Mammary epithelial cell (primary cell): ENCODE measurements at regions of chr4 and their contacts with region 1.

Region 1: DNA sequence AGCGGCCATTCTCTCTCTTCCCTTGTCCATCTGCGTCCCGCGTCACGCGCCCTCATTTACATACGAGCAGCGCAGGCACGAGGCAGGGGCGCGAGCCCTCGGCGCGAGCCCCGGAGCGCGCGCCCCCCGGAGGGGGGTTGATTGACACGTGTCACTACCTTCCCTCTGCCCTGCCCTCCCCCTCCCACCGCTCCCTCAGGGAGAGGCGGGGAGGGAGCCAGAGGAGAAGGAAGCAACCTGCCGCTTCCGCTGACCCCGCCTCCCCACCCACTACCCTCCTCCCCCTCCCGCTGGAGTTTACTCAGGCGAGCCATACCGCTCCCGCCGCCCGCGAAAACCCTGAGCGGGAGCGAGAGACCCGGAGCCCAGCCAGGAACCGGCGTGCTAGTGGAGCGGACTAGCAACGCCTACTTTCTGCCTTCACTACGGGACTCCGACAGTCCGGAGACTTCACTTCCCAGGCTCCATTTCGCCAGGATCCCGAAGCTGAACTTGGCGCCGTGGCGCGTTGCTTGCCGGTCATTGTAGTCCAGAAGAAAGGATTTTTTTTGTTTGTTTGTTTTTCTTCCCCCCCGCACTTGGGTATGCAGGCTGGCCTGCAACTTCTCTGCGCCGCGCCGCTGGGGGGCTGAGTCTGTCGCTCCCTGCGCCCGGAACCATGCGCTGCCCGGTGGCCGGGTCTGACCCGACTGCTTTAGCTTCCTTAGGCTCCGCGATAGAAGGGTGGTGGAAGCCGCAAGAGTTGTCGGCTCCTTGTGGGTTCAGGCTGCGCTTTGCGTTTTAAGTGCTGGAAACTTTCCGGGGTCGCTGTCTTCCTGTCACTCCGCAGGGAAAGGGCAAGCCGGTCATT is at the start of gene LCORL:
- DNase-seq: peak; percentile 96
- H3K4me3 ChIP-seq: peak within 1 kb of the TSS; percentile 61 to 99 (median 94)
- H3K27ac ChIP-seq: peak within 1 kb of the TSS; percentile 83
- H3K4me1 ChIP-seq: peaks cover 7% of the 10 kb centered on the region
- H3K27me3 ChIP-seq: no peaks in the 10 kb centered on the region
- CTCF ChIP-seq: no peak
- total RNA-seq, gene LCORL: 11.3 to 14.6 TPM

Region 2: GRCh38 chr4:17576932-17577665 is 444.8 kb before region 1 on chr4 and contains the start of gene LAP3:
- CTCF ChIA-PET with region 1: no interaction called
- dilution Hi-C with region 1: no loop called
- in situ Hi-C with region 1: no loop called
- intact Hi-C with region 1: loop called (anchors 5 kb)
- DNase-seq: peak; percentile 95
- H3K4me3 ChIP-seq: peak within 1 kb of the TSS; percentile 72 to 84 (median 72)
- H3K27ac ChIP-seq: peak within 1 kb of the TSS; percentile 89
- H3K4me1 ChIP-seq: peaks cover 6% of the 10 kb centered on the region
- H3K27me3 ChIP-seq: no peaks in the 10 kb centered on the region
- CTCF ChIP-seq: no peak
- total RNA-seq, gene LAP3: 36.1 to 69.5 TPM

Region 3: DNA sequence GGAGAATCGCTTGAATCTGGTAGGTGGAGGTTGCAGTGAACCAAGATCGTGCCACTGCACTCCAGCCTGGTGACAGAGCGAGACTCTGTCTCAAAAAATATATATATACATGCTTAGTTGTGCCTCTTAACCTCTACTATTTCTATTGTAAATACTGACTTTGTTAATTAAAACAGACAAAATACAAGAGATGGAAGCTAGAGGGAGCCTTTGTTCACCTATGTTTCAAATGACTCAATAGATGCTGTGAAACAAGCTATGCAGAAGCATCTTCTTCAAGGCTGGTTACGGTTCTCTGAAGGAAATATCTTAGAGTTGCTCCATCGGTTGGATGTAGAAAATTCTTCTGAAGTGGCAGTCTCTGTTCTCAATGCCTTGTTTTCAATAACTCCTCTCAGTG is 204.9 kb before region 1 on chr4:
- CTCF ChIA-PET with region 1: interaction called, 3 read pairs
- dilution Hi-C with region 1: no loop called
- in situ Hi-C with region 1: no loop called
- intact Hi-C with region 1: loop called (anchors 1 kb)
- DNase-seq: peak; percentile 53
- H3K4me3 ChIP-seq: no peak overlapping the region
- H3K27ac ChIP-seq: no peak overlapping the region
- H3K4me1 ChIP-seq: peaks cover 9% of the 10 kb centered on the region
- H3K27me3 ChIP-seq: no peaks in the 10 kb centered on the region
- CTCF ChIP-seq: peak; percentile 47 to 55

Region 4: GRCh38 chr4:17962171-17962570 is 59.8 kb before region 1 on chr4:
- CTCF ChIA-PET with region 1: no interaction called
- dilution Hi-C with region 1: no loop called
- in situ Hi-C with region 1: no loop called
- intact Hi-C with region 1: loop called (anchors 10 kb)
- DNase-seq: no peak
- H3K4me3 ChIP-seq: no peak overlapping the region
- H3K27ac ChIP-seq: no peak overlapping the region
- H3K4me1 ChIP-seq: no peaks in the 10 kb centered on the region
- H3K27me3 ChIP-seq: no peaks in the 10 kb centered on the region
- CTCF ChIP-seq: no peak